OCI-LY7 (cell line): ENCODE measurements at regions of chr19 and their contacts with region 1.

Region 1: GRCh38 chr19:9834726-9835506 is at the start of gene PIN1:
- DNase-seq: peak; percentile 99
- H3K4me3 ChIP-seq: peak within 1 kb of the TSS; percentile 91
- H3K27ac ChIP-seq: peak within 1 kb of the TSS; percentile 29
- H3K4me1 ChIP-seq: peaks cover 17% of the 10 kb centered on the region
- CTCF ChIP-seq: 0 out of 2 replicates have a peak, but pooled peaks have one; percentile 39
- total RNA-seq, gene PIN1: 131 and 137 TPM in 2 replicates

Region 2: GRCh38 chr19:8643860-8644653 is 1190.9 kb before region 1 on chr19:
- CTCF ChIA-PET with region 1: interaction called, 12 read pairs
- POLR2A ChIA-PET with region 1: no interaction called
- intact Hi-C with region 1: no loop called
- DNase-seq: no peak
- H3K4me3 ChIP-seq: no peak overlapping the region
- H3K27ac ChIP-seq: no peak overlapping the region
- H3K4me1 ChIP-seq: no peaks in the 10 kb centered on the region
- CTCF ChIP-seq: no peak